GM12878 (cell line): ENCODE measurements at regions of chr3 and their contacts with region 1.

Region 1: GRCh38 chr3:28218071-28218916 is 23.1 kb upstream of the CMC1 start:
- DNase-seq: peak; percentile 28
- ATAC-seq: peak; percentile 91
- H3K4me3 ChIP-seq: no peak overlapping the region
- H3K27ac ChIP-seq: no peak overlapping the region
- H3K4me1 ChIP-seq: no peaks in the 10 kb centered on the region
- H3K27me3 ChIP-seq: no peaks in the 10 kb centered on the region
- CTCF ChIP-seq: no peak
- EP300 ChIP-seq: peak; percentile 78 to 88; a peak in 3 of 4 replicates
- POLR2A ChIP-seq: no peak
- RAD21 ChIP-seq: no peak

Region 2: GRCh38 chr3:27559835-27560234 is 658.5 kb before region 1 on chr3:
- CTCF ChIA-PET with region 1: no interaction called
- POLR2A ChIA-PET with region 1: no interaction called
- RAD21 ChIA-PET with region 1: no interaction called
- SMC1A ChIA-PET with region 1: no interaction called
- in situ Hi-C with region 1: no loop called
- intact Hi-C with region 1: no loop called
- DNase-seq: no peak
- ATAC-seq: no peak
- H3K4me3 ChIP-seq: no peak overlapping the region
- H3K27ac ChIP-seq: no peak overlapping the region
- H3K4me1 ChIP-seq: no peaks in the 10 kb centered on the region
- H3K27me3 ChIP-seq: no peaks in the 10 kb centered on the region
- CTCF ChIP-seq: no peak
- EP300 ChIP-seq: no peak
- POLR2A ChIP-seq: no peak
- RAD21 ChIP-seq: no peak

Region 3: GRCh38 chr3:27721717-27722542 is 496.4 kb before region 1 on chr3 and contains the start of gene EOMES:
- CTCF ChIA-PET with region 1: interaction called, 4 read pairs
- POLR2A ChIA-PET with region 1: interaction called, 4 read pairs
- RAD21 ChIA-PET with region 1: interaction called, 11 read pairs
- SMC1A ChIA-PET with region 1: interaction called, 7 read pairs
- in situ Hi-C with region 1: no loop called
- intact Hi-C with region 1: no loop called
- DNase-seq: no peak
- ATAC-seq: peak; percentile 65
- H3K4me3 ChIP-seq: peak within 1 kb of the TSS; percentile 44; the same call in 1 of the 2 replicates
- H3K27ac ChIP-seq: no peak within 1 kb of the TSS
- H3K4me1 ChIP-seq: no peaks in the 10 kb centered on the region
- H3K27me3 ChIP-seq: peaks cover 2 to 14% of the 10 kb centered on the region in 2 experiments
- CTCF ChIP-seq: peak; percentile 10 to 61 (median 52); a peak in 5 of 6 replicates
- EP300 ChIP-seq: no peak
- POLR2A ChIP-seq: no peak
- RAD21 ChIP-seq: no peak
- polyA plus RNA-seq, gene EOMES: 1.5 to 2.8 TPM

Region 4: DNA sequence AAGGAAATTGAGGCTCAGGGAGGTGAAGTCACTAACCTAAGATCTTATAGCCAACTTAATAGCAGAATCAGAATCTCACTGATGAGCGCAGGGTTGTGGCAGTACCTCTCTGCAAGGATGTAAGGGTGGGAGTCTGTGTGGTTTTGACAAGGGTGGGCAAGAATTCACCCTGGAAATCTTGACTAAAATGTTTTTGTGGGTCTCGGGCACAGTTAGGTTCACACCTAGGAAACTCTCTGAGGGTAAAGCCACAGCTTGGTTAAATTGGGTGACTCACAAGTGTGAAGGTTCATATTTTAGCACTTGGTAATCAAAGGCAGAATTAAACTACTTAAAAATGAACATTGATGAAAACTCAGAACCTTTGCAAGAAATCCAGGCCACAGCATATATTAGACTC is 318.0 kb before region 1 on chr3:
- CTCF ChIA-PET with region 1: no interaction called
- POLR2A ChIA-PET with region 1: no interaction called
- RAD21 ChIA-PET with region 1: no interaction called
- SMC1A ChIA-PET with region 1: no interaction called
- in situ Hi-C with region 1: no loop called
- intact Hi-C with region 1: no loop called
- DNase-seq: no peak
- ATAC-seq: peak; percentile 38
- H3K4me3 ChIP-seq: no peak overlapping the region
- H3K27ac ChIP-seq: no peak overlapping the region
- H3K4me1 ChIP-seq: no peaks in the 10 kb centered on the region
- H3K27me3 ChIP-seq: no peaks in the 10 kb centered on the region
- CTCF ChIP-seq: no peak
- EP300 ChIP-seq: no peak
- POLR2A ChIP-seq: no peak
- RAD21 ChIP-seq: no peak

Region 5: GRCh38 chr3:28077572-28077971 is 140.7 kb before region 1 on chr3:
- CTCF ChIA-PET with region 1: no interaction called
- POLR2A ChIA-PET with region 1: interaction called, 7 read pairs
- RAD21 ChIA-PET with region 1: interaction called, 7 read pairs
- SMC1A ChIA-PET with region 1: interaction called, 21 read pairs
- in situ Hi-C with region 1: no loop called
- intact Hi-C with region 1: no loop called
- DNase-seq: no peak
- ATAC-seq: no peak
- H3K4me3 ChIP-seq: no peak overlapping the region
- H3K27ac ChIP-seq: no peak overlapping the region
- H3K4me1 ChIP-seq: no peaks in the 10 kb centered on the region
- H3K27me3 ChIP-seq: no peaks in the 10 kb centered on the region
- CTCF ChIP-seq: no peak
- EP300 ChIP-seq: no peak
- POLR2A ChIP-seq: no peak
- RAD21 ChIP-seq: no peak

Region 6: GRCh38 chr3:28134792-28135375 is 83.4 kb before region 1 on chr3:
- CTCF ChIA-PET with region 1: interaction called, 10 read pairs
- POLR2A ChIA-PET with region 1: interaction called, 7 read pairs
- RAD21 ChIA-PET with region 1: interaction called, 70 read pairs
- SMC1A ChIA-PET with region 1: interaction called, 62 read pairs
- in situ Hi-C with region 1: no loop called
- intact Hi-C with region 1: loop called (anchors 5 kb)
- DNase-seq: no peak
- ATAC-seq: peak; percentile 16
- H3K4me3 ChIP-seq: no peak overlapping the region
- H3K27ac ChIP-seq: no peak overlapping the region
- H3K4me1 ChIP-seq: no peaks in the 10 kb centered on the region
- H3K27me3 ChIP-seq: no peaks in the 10 kb centered on the region
- CTCF ChIP-seq: no peak
- EP300 ChIP-seq: no peak
- POLR2A ChIP-seq: no peak
- RAD21 ChIP-seq: no peak

Region 7: DNA sequence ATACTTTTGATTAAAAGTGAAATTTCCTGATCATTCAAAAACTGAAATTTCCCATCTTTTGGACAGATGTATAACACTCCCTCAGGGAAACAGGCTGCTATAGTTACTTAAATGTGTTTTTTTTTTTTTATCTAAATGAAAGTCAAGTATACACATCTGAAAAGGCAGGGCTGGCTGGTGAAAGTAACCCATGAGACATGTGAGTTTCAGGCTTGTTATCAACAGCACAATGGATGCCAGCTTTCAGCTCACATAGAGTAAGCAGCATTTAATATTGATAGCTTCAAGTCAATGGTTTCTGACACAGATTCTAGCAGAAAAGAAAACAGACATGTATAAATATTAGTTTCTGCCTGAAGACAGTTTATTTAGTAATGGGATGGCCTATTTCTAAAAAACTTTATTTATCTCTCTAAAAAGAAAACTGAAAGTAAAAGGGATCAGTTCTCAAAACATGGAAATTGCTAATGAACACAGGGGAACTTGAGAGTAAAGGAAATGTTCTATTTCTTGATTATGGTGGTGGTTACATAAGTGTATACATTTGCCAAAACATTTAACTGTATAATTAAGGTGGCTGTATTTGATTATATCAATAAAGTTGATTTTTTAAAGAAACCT is 66.6 kb before region 1 on chr3:
- CTCF ChIA-PET with region 1: interaction called, 5 read pairs
- POLR2A ChIA-PET with region 1: interaction called, 3 read pairs
- RAD21 ChIA-PET with region 1: interaction called, 27 read pairs
- SMC1A ChIA-PET with region 1: interaction called, 21 read pairs
- in situ Hi-C with region 1: no loop called
- intact Hi-C with region 1: no loop called
- DNase-seq: peak; percentile 33
- ATAC-seq: peak; percentile 95
- H3K4me3 ChIP-seq: no peak overlapping the region
- H3K27ac ChIP-seq: no peak overlapping the region
- H3K4me1 ChIP-seq: no peaks in the 10 kb centered on the region
- H3K27me3 ChIP-seq: no peaks in the 10 kb centered on the region
- CTCF ChIP-seq: no peak
- EP300 ChIP-seq: no peak
- POLR2A ChIP-seq: no peak
- RAD21 ChIP-seq: no peak

Region 8: DNA sequence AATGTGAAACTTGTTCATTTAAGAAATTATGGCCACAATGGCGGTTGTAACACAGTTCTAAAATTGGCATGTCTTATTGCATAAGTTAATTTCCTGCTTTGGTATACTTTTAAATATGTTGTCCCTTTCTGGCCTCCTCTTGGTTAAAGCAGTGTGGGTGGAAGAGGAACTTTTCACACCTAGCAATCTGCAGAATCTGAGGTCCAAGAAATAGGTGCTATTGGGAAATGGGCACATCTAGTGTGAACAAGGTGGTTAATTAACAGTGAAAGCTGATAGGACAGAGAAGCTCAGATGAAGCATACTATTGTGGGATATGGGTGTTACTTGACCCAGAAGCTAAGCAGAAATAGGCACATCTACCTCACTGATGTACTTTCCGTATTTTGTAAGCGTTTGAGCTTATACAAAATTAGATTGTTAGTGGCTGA is 33.7 kb after region 1 on chr3:
- CTCF ChIA-PET with region 1: interaction called, 9 read pairs
- POLR2A ChIA-PET with region 1: interaction called, 5 read pairs
- RAD21 ChIA-PET with region 1: interaction called, 40 read pairs
- SMC1A ChIA-PET with region 1: interaction called, 35 read pairs
- in situ Hi-C with region 1: no loop called
- intact Hi-C with region 1: no loop called
- DNase-seq: no peak
- ATAC-seq: peak; percentile 86
- H3K4me3 ChIP-seq: no peak overlapping the region
- H3K27ac ChIP-seq: no peak overlapping the region
- H3K4me1 ChIP-seq: no peaks in the 10 kb centered on the region; the same call in 1 of the 2 replicates
- H3K27me3 ChIP-seq: no peaks in the 10 kb centered on the region
- CTCF ChIP-seq: no peak
- EP300 ChIP-seq: peak in 1 of 2 experiments; percentile 46; a peak in 2 of 4 replicates
- POLR2A ChIP-seq: no peak
- RAD21 ChIP-seq: no peak

Region 9: GRCh38 chr3:28317438-28318022 is 99.2 kb after region 1 on chr3:
- CTCF ChIA-PET with region 1: interaction called, 3 read pairs
- POLR2A ChIA-PET with region 1: no interaction called
- RAD21 ChIA-PET with region 1: interaction called, 6 read pairs
- SMC1A ChIA-PET with region 1: interaction called, 10 read pairs
- in situ Hi-C with region 1: no loop called
- intact Hi-C with region 1: no loop called
- DNase-seq: no peak
- ATAC-seq: peak; percentile 96
- H3K4me3 ChIP-seq: no peak overlapping the region
- H3K27ac ChIP-seq: no peak overlapping the region
- H3K4me1 ChIP-seq: no peaks in the 10 kb centered on the region
- H3K27me3 ChIP-seq: no peaks in the 10 kb centered on the region
- CTCF ChIP-seq: peak; percentile 58 to 61 (median 59); a peak in 5 of 6 replicates
- EP300 ChIP-seq: no peak
- POLR2A ChIP-seq: no peak
- RAD21 ChIP-seq: peak; percentile 43; the same call in 1 of the 2 replicates